ENCODE measurements at regions of chr3 and their contacts with region 1.

Region 1: DNA sequence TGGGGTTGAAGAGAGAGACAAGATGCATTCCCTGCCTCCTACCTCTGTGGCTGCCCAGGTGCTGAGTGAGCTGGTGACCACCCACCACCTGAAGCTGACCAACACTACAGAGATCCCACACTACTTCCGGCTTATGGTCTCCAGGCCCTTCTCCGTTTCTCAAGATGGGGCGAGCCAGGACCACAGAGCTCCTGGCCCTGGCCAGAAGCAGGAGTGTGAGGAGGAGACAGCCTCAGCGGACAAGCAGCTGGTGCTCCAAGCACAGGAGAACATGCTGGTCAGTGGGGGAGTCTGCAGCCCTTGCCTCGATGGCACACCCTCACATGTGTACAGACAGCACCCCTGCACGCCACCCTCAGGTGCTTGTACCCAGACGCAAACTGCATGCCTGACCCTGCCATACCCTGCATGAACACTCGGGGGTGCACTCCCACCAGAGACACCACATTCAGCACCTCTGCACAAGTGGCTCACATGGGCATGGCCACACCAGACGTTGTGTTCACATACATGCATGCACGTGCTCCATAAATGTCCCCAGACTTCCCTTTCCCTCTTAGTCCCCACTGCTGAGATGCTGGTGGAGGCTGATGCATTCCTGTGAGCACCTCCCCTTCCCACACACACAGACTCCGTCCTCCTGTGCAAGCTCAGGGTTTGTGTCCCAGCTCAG is 19.0 kb downstream of the ACAA1 start:
- DNase-seq: peak; percentile 69 to 85 (median 84)
- H3K4me3 ChIP-seq: no peak overlapping the region
- H3K27ac ChIP-seq: no peak overlapping the region
- H3K4me1 ChIP-seq: peaks cover 0 to 11% (median 5%) of the 10 kb centered on the region in 4 experiments
- H3K27me3 ChIP-seq: no peaks in the 10 kb centered on the region

Region 2: DNA sequence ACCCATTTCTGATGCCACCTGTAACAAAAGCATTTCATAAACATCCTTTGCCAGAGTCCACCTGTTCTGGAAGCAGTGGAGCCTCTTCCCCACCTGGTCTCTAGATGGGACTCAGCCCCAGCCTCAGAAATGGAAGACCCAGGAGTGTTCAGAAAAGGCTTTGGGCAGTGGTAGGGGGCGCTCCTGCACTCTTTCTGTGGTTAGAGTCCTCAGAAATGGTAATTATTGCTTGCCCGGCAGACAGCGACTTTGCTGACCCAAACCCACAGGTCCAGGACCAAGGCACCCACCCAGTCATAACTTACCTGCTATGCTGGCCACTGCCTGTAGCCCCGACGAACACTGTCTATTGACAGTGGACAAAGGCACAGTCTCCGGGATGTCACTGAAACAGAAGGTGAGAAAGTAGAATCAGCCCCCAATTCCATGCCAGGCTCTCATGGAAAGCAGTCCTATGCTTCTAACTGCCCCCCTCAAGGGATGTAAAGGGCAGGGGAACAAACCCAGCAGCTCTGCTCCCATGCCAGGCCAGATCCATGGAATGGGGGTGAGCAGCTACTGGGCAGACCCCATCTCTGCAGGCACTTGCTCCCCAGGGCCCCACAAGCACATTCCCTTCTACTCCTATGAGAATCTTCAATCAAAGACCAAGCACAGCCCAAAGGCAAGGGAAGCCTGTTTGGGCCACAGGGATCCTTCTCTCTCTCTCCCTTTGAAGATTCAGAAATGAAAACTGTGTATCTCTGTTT is 13.9 kb after region 1 on chr3:
- CTCF ChIA-PET with region 1: interaction called, 38 read pairs
- POLR2A ChIA-PET with region 1: no interaction called
- DNase-seq: no peak
- H3K4me3 ChIP-seq: no peak overlapping the region
- H3K27ac ChIP-seq: no peak overlapping the region
- H3K4me1 ChIP-seq: peaks cover 0 to 20% (median 16%) of the 10 kb centered on the region in 4 experiments
- H3K27me3 ChIP-seq: no peaks in the 10 kb centered on the region

Region 3: DNA sequence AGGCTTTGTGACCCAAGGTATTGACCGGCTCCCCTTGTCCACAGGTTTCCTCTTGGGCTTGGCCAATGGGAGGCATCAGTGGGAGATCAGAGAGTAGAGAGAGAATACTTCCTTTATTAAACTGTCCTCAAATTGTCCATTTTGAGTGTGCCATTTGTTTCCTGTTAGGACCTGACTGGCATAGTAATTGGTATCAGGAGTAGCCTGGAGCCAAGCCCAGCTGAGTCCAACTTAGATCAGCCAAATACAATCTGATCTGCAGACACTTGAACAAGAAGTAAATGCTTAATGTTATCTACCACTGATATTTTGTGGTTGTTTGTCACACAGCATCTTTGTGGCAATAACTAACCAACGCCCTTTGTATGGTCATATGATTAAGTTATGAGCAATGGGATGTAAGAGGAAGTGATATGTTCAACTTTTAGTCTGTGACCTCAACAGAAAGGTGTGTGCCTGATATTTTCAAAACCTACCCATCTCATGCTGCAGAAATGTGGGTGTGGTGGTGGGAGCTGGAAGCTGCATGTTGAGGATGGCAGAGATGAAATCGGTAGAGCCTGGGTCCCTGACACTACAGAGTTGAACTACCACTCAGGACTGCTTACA is 33.9 kb after region 1 on chr3:
- CTCF ChIA-PET with region 1: no interaction called
- POLR2A ChIA-PET with region 1: no interaction called
- DNase-seq: peak in 2 of 3 donors; percentile 48 to 66
- H3K4me3 ChIP-seq: no peak overlapping the region
- H3K27ac ChIP-seq: no peak overlapping the region
- H3K4me1 ChIP-seq: peaks cover 9 to 49% (median 27%) of the 10 kb centered on the region in 4 experiments
- H3K27me3 ChIP-seq: no peaks in the 10 kb centered on the region

Region 4: GRCh38 chr3:38297947-38298711 is 180.2 kb after region 1 on chr3:
- CTCF ChIA-PET with region 1: interaction called, 10 read pairs
- POLR2A ChIA-PET with region 1: no interaction called
- DNase-seq: peak; percentile 14 to 34 (median 22)
- H3K4me3 ChIP-seq: no peak overlapping the region
- H3K27ac ChIP-seq: no peak overlapping the region
- H3K4me1 ChIP-seq: no peaks in the 10 kb centered on the region
- H3K27me3 ChIP-seq: no peaks in the 10 kb centered on the region

Region 5: DNA sequence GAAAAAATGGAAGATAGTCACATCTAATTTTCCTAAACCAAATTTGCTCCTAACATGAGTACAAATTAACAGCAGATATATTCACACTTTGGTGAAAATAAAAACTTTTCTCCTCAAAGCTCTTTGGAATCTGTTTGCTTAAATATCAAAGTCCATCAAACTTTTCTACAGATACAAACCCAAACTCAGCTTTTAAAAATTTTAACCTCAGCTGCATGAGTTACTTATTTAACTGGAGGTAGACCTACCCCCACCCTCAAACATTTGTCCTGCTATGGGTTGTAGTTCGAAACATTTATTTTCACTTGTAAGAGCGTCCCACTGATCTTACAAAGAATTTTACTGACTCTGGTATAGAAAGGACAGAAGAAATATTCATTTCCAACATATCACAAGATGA is 219.8 kb after region 1 on chr3:
- CTCF ChIA-PET with region 1: interaction called, 15 read pairs
- POLR2A ChIA-PET with region 1: no interaction called
- DNase-seq: no peak
- H3K4me3 ChIP-seq: no peak overlapping the region
- H3K27ac ChIP-seq: no peak overlapping the region
- H3K4me1 ChIP-seq: no peaks in the 10 kb centered on the region
- H3K27me3 ChIP-seq: no peaks in the 10 kb centered on the region

Region 6: DNA sequence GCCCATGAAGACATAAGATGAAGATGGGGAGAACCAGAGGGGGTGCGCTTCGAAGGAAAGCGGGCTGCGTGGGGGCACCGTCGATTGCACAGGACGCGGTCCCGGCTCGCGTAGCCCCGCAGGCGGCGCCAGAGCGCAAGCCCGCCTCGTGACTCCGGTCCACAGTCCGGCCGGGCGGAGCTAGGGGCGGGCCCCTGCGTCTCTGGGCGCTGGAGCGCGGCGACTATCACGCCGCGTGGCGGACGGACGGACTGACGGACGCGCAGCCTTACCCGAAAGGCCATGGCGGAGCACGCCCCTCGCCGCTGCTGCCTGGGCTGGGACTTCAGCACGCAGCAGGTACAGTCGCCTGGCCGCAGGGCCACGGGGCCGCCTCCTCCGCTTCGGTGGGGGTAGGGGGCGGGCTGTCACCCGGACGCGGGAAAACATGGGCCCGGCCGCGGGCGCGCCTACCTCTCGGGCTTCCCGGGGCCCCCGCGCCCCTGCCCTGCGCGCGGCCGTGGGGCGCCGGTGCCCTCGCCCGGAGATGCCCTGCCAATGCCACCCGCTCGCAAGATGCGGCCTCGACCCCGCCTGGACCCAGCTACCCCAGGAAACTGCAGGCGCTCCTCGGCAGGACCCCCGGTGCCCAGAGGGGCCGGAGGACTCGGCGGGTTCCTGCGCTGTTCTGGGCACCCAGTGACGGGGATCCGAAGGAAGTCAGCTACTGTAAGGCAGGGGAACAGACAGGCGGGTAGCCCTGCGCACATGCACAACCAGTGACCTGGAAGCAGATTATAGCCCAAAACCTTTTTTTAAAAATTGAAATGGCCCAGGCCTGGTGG is 228.9 kb after region 1 on chr3 and contains the start of gene XYLB:
- CTCF ChIA-PET with region 1: interaction called, 54 read pairs
- POLR2A ChIA-PET with region 1: no interaction called
- DNase-seq: peak; percentile 73 to 81 (median 80)
- H3K4me3 ChIP-seq: peak within 1 kb of the TSS; percentile 28 to 86 (median 75)
- H3K27ac ChIP-seq: peak within 1 kb of the TSS in 1 of 2 experiments; percentile 25
- H3K4me1 ChIP-seq: peaks cover 0 to 14% (median 9%) of the 10 kb centered on the region in 4 experiments
- H3K27me3 ChIP-seq: no peaks in the 10 kb centered on the region